Lower leg skin (tissue), 4 donors: ENCODE measurements at regions of chr1 and their contacts with region 1.

Region 1: GRCh38 chr1:6889875-6890480 is 104.7 kb downstream of the CAMTA1 start:
- DNase-seq: peak in 1 of 2 donors; percentile 39
- H3K4me3 ChIP-seq: no peak overlapping the region
- CTCF ChIP-seq: no peak
- POLR2A ChIP-seq: no peak

Region 2: DNA sequence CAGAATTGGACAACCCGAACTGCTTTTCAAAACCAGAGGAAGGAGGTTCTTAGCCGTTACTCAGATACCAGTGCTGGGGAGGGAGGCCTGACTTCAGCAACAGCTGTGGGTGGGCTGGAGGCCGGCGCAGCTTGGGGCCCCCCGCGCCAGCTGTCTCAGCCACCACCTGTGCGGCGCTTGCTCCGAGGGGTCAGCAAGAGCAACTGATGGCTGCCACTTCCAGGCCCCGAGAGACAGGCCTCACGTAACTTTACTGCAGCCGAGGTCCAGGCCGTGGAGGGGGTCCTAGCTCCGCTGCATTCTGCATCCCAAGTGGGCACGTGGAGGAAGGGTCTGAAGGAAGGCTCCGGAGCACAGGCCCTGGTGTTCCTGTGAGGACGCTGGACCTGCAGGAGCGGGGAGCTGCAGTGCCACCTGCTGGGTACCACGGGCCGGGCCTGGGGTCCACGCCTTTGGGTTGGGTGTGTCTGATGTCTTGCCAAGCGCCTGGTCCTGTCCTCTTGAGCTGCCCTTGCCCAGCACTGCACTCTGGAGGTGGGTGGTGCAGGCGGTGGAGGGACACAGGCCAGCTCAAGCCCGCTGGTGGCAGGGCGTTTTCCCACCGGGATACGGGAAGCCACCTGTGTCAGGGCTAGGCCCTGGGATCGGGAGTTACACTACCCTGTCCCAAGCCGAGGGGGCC is 255.5 kb before region 1 on chr1:
- intact Hi-C with region 1: no loop called
- DNase-seq: no peak
- H3K4me3 ChIP-seq: no peak overlapping the region
- CTCF ChIP-seq: no peak
- POLR2A ChIP-seq: no peak

Region 3: DNA sequence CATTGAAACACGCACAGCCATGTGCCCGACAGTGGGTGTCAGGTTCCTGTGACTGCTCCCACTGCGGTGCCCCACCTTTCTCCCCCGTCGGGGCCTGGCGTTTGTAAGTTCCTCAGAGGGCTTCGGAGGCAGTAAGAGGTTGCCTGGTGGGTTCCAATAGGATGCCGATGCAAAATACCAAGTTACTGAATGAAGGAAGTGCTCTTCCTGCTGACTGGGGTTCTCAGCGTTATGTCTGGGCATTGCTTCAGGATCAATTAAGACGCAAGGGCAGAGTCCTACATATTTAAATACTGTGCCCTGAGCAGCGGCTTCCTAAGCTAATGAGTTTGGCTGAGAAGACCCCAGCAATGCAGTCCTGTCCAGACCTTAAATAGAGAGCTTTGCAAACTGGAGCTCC is 159.5 kb before region 1 on chr1:
- intact Hi-C with region 1: loop called (anchors 5 kb)
- DNase-seq: no peak
- H3K4me3 ChIP-seq: no peak overlapping the region
- CTCF ChIP-seq: no peak
- POLR2A ChIP-seq: no peak

Region 4: GRCh38 chr1:6794164-6794563 is 95.8 kb before region 1 on chr1:
- intact Hi-C with region 1: loop called (anchors 10 kb)
- DNase-seq: no peak
- H3K4me3 ChIP-seq: no peak overlapping the region
- CTCF ChIP-seq: no peak
- POLR2A ChIP-seq: no peak